Activated CD4-positive, alpha-beta T cell treated with anti-CD3 and anti-CD28 coated beads, Interleukin-2, amount 10 ng/mL, durations not matched to agents 7 days and 5 days (primary cell): ENCODE measurements at regions of chr11 and their contacts with region 1.

Region 1: GRCh38 chr11:66282468-66283386 is 4.8 kb downstream of the CNIH2 start:
- DNase-seq: peak; percentile 100
- H3K4me3 Mint-ChIP-seq: peak overlapping the region; percentile 56
- H3K27ac Mint-ChIP-seq: peak overlapping the region; percentile 66
- H3K4me1 Mint-ChIP-seq: peaks cover 39% of the 10 kb centered on the region
- H3K27me3 Mint-ChIP-seq: peaks cover 3% of the 10 kb centered on the region

Region 2: GRCh38 chr11:66051766-66052663 is 230.7 kb before region 1 on chr11 and contains the start of gene SF3B2:
- CTCF ChIA-PET with region 1: no interaction called
- POLR2A ChIA-PET with region 1: no interaction called
- DNase-seq: peak; percentile 98
- H3K4me3 Mint-ChIP-seq: peak within 1 kb of the TSS; percentile 100
- H3K27ac Mint-ChIP-seq: peak within 1 kb of the TSS; percentile 95
- H3K4me1 Mint-ChIP-seq: peaks cover 40% of the 10 kb centered on the region
- H3K27me3 Mint-ChIP-seq: peaks cover 2% of the 10 kb centered on the region
- total RNA-seq, gene SF3B2: 217 to 223 TPM

Region 3: GRCh38 chr11:66268283-66268951 is 14.3 kb before region 1 on chr11 and contains the start of gene RAB1B:
- CTCF ChIA-PET with region 1: interaction called, 43 read pairs
- POLR2A ChIA-PET with region 1: interaction called, 3 read pairs
- DNase-seq: peak; percentile 100
- H3K4me3 Mint-ChIP-seq: peak within 1 kb of the TSS; percentile 88
- H3K27ac Mint-ChIP-seq: peak within 1 kb of the TSS; percentile 90
- H3K4me1 Mint-ChIP-seq: peaks cover 46% of the 10 kb centered on the region
- H3K27me3 Mint-ChIP-seq: no peaks in the 10 kb centered on the region
- total RNA-seq, gene RAB1B: 151 to 174 TPM

Region 4: GRCh38 chr11:66489636-66490035 is 206.9 kb after region 1 on chr11:
- CTCF ChIA-PET with region 1: no interaction called
- POLR2A ChIA-PET with region 1: no interaction called
- DNase-seq: no peak
- H3K4me3 Mint-ChIP-seq: no peak overlapping the region
- H3K27ac Mint-ChIP-seq: no peak overlapping the region
- H3K4me1 Mint-ChIP-seq: peaks cover 2% of the 10 kb centered on the region
- H3K27me3 Mint-ChIP-seq: no peaks in the 10 kb centered on the region